Esophagus muscularis mucosa (tissue), 4 donors: ENCODE measurements at regions of chr1 and their contacts with region 1.

Region 1: GRCh38 chr1:92858564-92859399 is 26.9 kb downstream of the RPL5 start:
- DNase-seq: peak; percentile 93
- H3K4me3 ChIP-seq: peak overlapping the region; percentile 15 to 39 (median 34)
- H3K27ac ChIP-seq: peak overlapping the region in 3 of 4 donors; percentile 29 to 39 (median 34)
- H3K4me1 ChIP-seq: peaks cover 0 to 15% (median 8%) of the 10 kb centered on the region in 4 donors
- H3K27me3 ChIP-seq: no peaks in the 10 kb centered on the region
- CTCF ChIP-seq: peak; percentile 92 to 98 (median 96)
- EP300 ChIP-seq: no peak
- POLR2A ChIP-seq: no peak

Region 2: DNA sequence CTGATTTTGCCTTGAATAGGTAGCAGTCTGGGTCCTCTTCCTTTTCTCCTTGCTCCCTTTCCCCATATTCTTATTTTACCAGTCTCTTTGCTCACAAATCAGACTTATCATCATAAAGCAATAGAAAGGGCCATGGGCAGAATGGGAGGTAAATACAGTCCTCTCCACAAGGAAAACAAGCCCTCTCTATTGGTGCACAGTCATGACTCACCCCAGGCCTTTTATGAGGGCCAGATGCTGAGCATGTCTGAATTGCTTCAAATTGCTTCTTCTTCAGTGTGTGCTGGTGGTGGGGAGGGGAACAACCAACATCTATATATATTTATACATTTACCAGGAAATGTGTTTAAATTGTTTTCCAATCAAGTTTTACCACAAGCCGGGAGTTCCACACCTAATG is 447.3 kb before region 1 on chr1:
- intact Hi-C with region 1: no loop called
- DNase-seq: peak; percentile 4
- H3K4me3 ChIP-seq: no peak overlapping the region
- H3K27ac ChIP-seq: no peak overlapping the region
- H3K4me1 ChIP-seq: no peaks in the 10 kb centered on the region
- H3K27me3 ChIP-seq: no peaks in the 10 kb centered on the region
- CTCF ChIP-seq: no peak
- EP300 ChIP-seq: no peak
- POLR2A ChIP-seq: no peak

Region 3: GRCh38 chr1:92960395-92961130 is 101.8 kb after region 1 on chr1:
- intact Hi-C with region 1: loop called (anchors 2 kb)
- DNase-seq: no peak
- H3K4me3 ChIP-seq: peak overlapping the region; percentile 89 to 98 (median 90)
- H3K27ac ChIP-seq: peak overlapping the region; percentile 98 to 99 (median 98)
- H3K4me1 ChIP-seq: peaks cover 16 to 57% (median 53%) of the 10 kb centered on the region in 4 donors
- H3K27me3 ChIP-seq: no peaks in the 10 kb centered on the region
- CTCF ChIP-seq: peak; percentile 63 to 82 (median 64)
- EP300 ChIP-seq: no peak
- POLR2A ChIP-seq: no peak

Region 4: DNA sequence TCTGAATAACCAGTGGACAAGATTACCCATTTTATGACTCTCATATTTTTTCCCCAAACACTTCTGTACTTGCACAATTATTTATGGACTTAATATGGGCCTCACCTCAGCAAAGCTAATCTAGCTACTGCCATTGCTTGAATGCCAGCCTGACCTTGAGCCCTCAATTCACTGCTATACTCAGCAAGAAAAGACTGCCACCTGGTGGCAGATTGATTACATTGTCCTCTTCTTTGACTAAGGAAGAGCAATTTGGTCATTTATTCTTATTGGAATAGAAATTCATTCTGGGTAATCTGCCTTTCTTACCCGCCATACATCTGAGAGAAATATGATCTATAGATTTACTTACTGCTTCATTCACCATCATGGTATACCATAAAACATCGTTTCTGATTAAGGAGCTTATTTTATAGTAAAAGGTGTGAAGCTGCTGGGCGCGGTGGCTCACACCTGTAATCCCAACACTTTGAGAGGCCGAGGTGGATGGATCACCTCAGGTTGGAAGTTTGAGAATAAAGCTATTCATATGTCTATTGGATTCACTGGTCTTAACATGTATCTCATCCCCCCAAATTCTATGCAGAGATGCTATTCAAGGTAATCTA is 135.4 kb after region 1 on chr1:
- intact Hi-C with region 1: loop called (anchors 1 kb)
- DNase-seq: peak; percentile 92
- H3K4me3 ChIP-seq: no peak overlapping the region
- H3K27ac ChIP-seq: no peak overlapping the region
- H3K4me1 ChIP-seq: no peaks in the 10 kb centered on the region
- H3K27me3 ChIP-seq: no peaks in the 10 kb centered on the region
- CTCF ChIP-seq: peak; percentile 82 to 86 (median 85)
- EP300 ChIP-seq: no peak
- POLR2A ChIP-seq: no peak

Region 5: GRCh38 chr1:93078986-93079654 is 220.3 kb after region 1 on chr1 and contains the start of gene MTF2:
- intact Hi-C with region 1: loop called (anchors 10 kb)
- DNase-seq: peak; percentile 97
- H3K4me3 ChIP-seq: peak within 1 kb of the TSS; percentile 87 to 94 (median 90)
- H3K27ac ChIP-seq: peak within 1 kb of the TSS; percentile 82 to 85 (median 83)
- H3K4me1 ChIP-seq: peaks cover 26 to 36% (median 31%) of the 10 kb centered on the region in 4 donors
- H3K27me3 ChIP-seq: no peaks in the 10 kb centered on the region
- CTCF ChIP-seq: peak in 1 of 3 experiments; percentile 21
- EP300 ChIP-seq: no peak
- POLR2A ChIP-seq: peak; percentile 6
- total RNA-seq, gene MTF2: 7.1 to 13.4 (median 9.9) TPM